CD4-positive, alpha-beta T cell (primary cell): ENCODE measurements at regions of chr11 and their contacts with region 1.

Region 1: DNA sequence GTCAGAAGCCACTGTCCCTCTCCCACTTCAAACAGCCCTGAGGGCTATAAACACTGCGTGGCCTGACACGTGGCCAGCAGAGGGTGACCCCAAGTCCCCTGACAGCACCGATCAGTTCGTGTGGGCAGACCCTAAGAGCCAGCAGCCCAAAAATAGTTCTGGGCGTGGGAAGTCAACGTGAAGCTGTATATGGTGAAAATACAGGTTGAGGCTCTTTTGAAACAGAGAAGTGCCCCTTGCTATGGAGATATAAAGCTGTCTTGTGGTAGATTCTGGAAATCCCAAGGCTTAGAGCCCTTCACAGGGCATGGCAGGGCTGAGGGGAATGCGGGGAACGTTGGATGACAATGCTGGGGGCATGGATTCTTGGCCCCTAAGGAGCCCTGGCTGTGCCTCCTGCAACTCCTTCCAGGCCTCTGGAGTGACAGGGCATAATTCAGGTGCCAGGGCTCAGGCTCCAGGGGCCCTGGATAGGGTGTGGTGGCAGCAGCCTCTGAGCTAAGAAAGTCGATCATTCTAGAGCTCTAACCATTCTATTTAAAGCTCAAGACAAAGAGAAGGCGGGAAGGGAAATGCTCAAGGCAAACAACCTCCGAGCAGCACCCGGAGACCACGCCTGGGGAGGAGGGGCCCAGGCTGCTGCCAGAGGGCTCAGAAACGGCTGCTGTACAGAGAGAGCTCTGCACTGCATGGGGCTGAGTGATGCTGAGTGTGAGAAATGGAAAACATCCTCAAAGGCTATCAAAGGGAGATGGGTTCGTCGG is 60.4 kb upstream of the CD5 start:
- DNase-seq: peak; percentile 72 to 95 (median 90)
- ATAC-seq: peak; percentile 96
- H3K4me3 ChIP-seq: peak overlapping the region; percentile 27
- H3K4me3 Mint-ChIP-seq: peak overlapping the region; percentile 83
- H3K27ac ChIP-seq: peak overlapping the region; percentile 90 to 93
- H3K27ac Mint-ChIP-seq: peak overlapping the region; percentile 98
- H3K4me1 ChIP-seq: peaks cover 56% of the 10 kb centered on the region
- H3K4me1 Mint-ChIP-seq: peaks cover 62% of the 10 kb centered on the region
- H3K27me3 ChIP-seq: no peaks in the 10 kb centered on the region
- H3K27me3 Mint-ChIP-seq: no peaks in the 10 kb centered on the region
- CTCF ChIP-seq: no peak

Region 2: GRCh38 chr11:60265373-60266214 is 776.3 kb before region 1 on chr11:
- CTCF ChIA-PET with region 1: no interaction called
- POLR2A ChIA-PET with region 1: no interaction called
- intact Hi-C with region 1: no loop called
- DNase-seq: peak in 3 of 14 experiments; percentile 24 to 51 (median 46)
- ATAC-seq: no peak
- H3K4me3 ChIP-seq: no peak overlapping the region
- H3K4me3 Mint-ChIP-seq: no peak overlapping the region
- H3K27ac ChIP-seq: no peak overlapping the region
- H3K27ac Mint-ChIP-seq: no peak overlapping the region
- H3K4me1 ChIP-seq: no peaks in the 10 kb centered on the region
- H3K4me1 Mint-ChIP-seq: no peaks in the 10 kb centered on the region
- H3K27me3 ChIP-seq: no peaks in the 10 kb centered on the region
- H3K27me3 Mint-ChIP-seq: peaks cover 9% of the 10 kb centered on the region
- CTCF ChIP-seq: peak; percentile 64

Region 3: DNA sequence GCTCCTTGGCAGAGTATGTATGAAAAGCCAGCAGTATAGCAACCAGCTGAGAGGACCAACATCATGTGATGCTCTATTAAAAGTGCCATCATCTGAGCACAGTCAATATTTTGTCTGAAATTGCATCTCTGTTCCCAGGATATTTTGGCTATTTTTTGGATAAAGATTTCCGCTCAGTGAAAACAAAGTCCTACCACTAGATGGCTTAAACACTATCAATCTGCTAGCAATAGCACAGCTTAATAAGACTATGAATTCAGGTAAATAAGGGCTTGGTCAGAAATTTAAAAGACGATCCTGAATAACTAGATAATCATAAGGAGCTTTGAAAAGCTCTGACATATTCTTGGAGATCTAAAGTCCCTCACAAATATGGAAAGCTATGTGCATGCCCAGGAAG is 452.3 kb before region 1 on chr11:
- CTCF ChIA-PET with region 1: no interaction called
- POLR2A ChIA-PET with region 1: no interaction called
- intact Hi-C with region 1: no loop called
- DNase-seq: no peak
- ATAC-seq: no peak
- H3K4me3 ChIP-seq: no peak overlapping the region
- H3K4me3 Mint-ChIP-seq: no peak overlapping the region
- H3K27ac ChIP-seq: no peak overlapping the region
- H3K27ac Mint-ChIP-seq: no peak overlapping the region
- H3K4me1 ChIP-seq: no peaks in the 10 kb centered on the region
- H3K4me1 Mint-ChIP-seq: no peaks in the 10 kb centered on the region
- H3K27me3 ChIP-seq: peaks cover 0 to 2% of the 10 kb centered on the region in 2 experiments
- H3K27me3 Mint-ChIP-seq: no peaks in the 10 kb centered on the region
- CTCF ChIP-seq: no peak

Region 4: GRCh38 chr11:60913793-60914632 is 127.9 kb before region 1 on chr11 and contains the start of gene TMEM109:
- CTCF ChIA-PET with region 1: interaction called, 3 read pairs
- POLR2A ChIA-PET with region 1: interaction called, 10 read pairs
- intact Hi-C with region 1: no loop called
- DNase-seq: peak; percentile 80 to 95 (median 85)
- ATAC-seq: peak; percentile 67
- H3K4me3 ChIP-seq: peak within 1 kb of the TSS; percentile 95
- H3K4me3 Mint-ChIP-seq: peak within 1 kb of the TSS; percentile 98
- H3K27ac ChIP-seq: peak within 1 kb of the TSS; percentile 97 to 98
- H3K27ac Mint-ChIP-seq: peak within 1 kb of the TSS; percentile 92
- H3K4me1 ChIP-seq: peaks cover 68% of the 10 kb centered on the region
- H3K4me1 Mint-ChIP-seq: peaks cover 65% of the 10 kb centered on the region
- H3K27me3 ChIP-seq: no peaks in the 10 kb centered on the region
- H3K27me3 Mint-ChIP-seq: no peaks in the 10 kb centered on the region
- CTCF ChIP-seq: no peak
- total RNA-seq, gene TMEM109: 27.8 to 32.9 TPM

Region 5: DNA sequence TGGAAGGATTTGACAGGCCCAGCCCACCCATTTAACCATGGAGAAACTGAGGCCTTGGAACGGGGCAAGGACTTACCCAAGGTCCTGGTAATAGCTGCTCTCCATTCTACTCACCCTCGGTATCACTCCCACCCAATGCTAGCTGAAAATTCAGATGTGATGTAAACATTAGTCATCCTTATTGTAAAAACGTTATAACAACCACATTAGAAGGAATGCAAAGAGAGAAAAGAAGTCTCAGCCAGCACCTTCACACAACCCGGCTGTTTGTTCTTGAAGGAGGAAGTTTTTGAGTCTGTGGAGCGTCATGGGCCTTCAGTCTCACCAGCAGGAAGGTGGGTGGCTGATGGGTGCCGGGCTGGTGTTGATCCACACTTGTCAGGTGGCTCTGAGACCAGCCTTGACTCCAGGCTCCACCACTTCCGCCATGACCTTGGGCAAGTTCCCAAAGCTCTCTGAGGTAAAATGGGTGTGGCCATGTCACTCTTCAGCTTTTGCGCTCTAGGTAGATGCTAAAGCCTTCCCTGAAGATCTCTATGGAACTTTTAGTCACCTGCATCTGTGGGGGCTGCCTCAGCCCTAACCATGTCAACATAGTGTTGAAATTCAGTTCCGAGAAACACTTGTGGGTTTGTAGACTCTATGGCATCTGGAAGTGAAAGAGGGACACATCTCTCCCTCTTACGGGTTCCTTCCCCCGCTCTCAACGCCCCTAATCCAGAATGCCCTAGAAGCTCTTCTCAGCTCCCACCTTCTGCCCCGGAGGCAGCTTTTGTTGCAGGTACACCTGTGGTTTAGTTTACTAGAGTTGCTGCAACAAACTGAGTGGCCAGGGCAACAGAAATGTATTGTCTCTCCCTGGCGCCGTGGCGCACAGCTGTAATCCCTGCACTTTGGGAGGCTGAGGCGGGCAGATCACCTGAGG is 55.7 kb before region 1 on chr11:
- CTCF ChIA-PET with region 1: interaction called, 3 read pairs
- POLR2A ChIA-PET with region 1: interaction called, 89 read pairs
- intact Hi-C with region 1: loop called in 1 of 2 experiments (anchors 2 kb)
- DNase-seq: peak; percentile 81 to 99 (median 90)
- ATAC-seq: peak; percentile 81
- H3K4me3 ChIP-seq: peak overlapping the region; percentile 41
- H3K4me3 Mint-ChIP-seq: peak overlapping the region; percentile 72
- H3K27ac ChIP-seq: peak overlapping the region; percentile 86 to 95
- H3K27ac Mint-ChIP-seq: peak overlapping the region; percentile 94
- H3K4me1 ChIP-seq: peaks cover 91% of the 10 kb centered on the region
- H3K4me1 Mint-ChIP-seq: peaks cover 98% of the 10 kb centered on the region
- H3K27me3 ChIP-seq: no peaks in the 10 kb centered on the region
- H3K27me3 Mint-ChIP-seq: no peaks in the 10 kb centered on the region
- CTCF ChIP-seq: no peak

Region 6: DNA sequence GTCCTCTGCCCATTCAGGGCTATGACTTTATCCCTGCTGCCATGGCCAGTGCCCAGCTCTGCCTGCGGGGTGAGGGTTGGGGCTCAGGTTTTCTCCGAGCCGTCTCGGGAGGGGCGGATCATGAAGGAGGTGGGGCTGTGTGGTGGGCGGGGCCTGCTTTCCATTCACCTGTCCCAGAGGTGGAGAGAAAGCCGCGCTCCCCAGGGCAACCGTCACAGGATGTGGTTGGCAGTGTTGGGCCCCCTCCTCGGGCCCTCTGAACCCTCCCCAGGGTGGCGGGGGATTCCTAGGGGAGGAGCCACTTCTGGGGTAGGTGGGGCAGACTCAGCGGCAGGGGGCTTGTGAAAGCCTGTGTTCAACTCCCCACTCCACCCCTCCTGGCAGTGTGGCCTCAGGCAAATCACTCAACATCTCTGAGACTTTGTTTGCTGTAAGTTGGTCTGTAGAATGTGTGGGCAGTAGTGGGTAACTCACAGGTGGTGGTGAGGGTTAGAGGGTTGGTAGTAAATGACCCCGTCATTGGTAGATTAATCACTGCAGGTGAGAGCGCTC is 20.2 kb before region 1 on chr11:
- CTCF ChIA-PET with region 1: interaction called, 4 read pairs
- POLR2A ChIA-PET with region 1: interaction called, 307 read pairs
- intact Hi-C with region 1: loop called in 1 of 2 experiments (anchors 1 kb)
- DNase-seq: peak; percentile 82 to 97 (median 92)
- ATAC-seq: peak; percentile 71
- H3K4me3 ChIP-seq: peak overlapping the region; percentile 21
- H3K4me3 Mint-ChIP-seq: peak overlapping the region; percentile 87
- H3K27ac ChIP-seq: peak overlapping the region; percentile 81 to 88
- H3K27ac Mint-ChIP-seq: peak overlapping the region; percentile 99
- H3K4me1 ChIP-seq: peaks cover 85% of the 10 kb centered on the region
- H3K4me1 Mint-ChIP-seq: peaks cover 85% of the 10 kb centered on the region
- H3K27me3 ChIP-seq: no peaks in the 10 kb centered on the region
- H3K27me3 Mint-ChIP-seq: no peaks in the 10 kb centered on the region
- CTCF ChIP-seq: no peak

Region 7: GRCh38 chr11:61071208-61071681 is 29.3 kb after region 1 on chr11:
- CTCF ChIA-PET with region 1: no interaction called
- POLR2A ChIA-PET with region 1: interaction called, 237 read pairs
- intact Hi-C with region 1: loop called in 1 of 2 experiments (anchors 2 kb)
- DNase-seq: peak; percentile 37 to 88 (median 63)
- ATAC-seq: peak; percentile 95
- H3K4me3 ChIP-seq: no peak overlapping the region
- H3K4me3 Mint-ChIP-seq: peak overlapping the region; percentile 82
- H3K27ac ChIP-seq: peak overlapping the region; percentile 26 to 58
- H3K27ac Mint-ChIP-seq: peak overlapping the region; percentile 92
- H3K4me1 ChIP-seq: peaks cover 80% of the 10 kb centered on the region
- H3K4me1 Mint-ChIP-seq: peaks cover 95% of the 10 kb centered on the region
- H3K27me3 ChIP-seq: no peaks in the 10 kb centered on the region
- H3K27me3 Mint-ChIP-seq: no peaks in the 10 kb centered on the region
- CTCF ChIP-seq: no peak

Region 8: DNA sequence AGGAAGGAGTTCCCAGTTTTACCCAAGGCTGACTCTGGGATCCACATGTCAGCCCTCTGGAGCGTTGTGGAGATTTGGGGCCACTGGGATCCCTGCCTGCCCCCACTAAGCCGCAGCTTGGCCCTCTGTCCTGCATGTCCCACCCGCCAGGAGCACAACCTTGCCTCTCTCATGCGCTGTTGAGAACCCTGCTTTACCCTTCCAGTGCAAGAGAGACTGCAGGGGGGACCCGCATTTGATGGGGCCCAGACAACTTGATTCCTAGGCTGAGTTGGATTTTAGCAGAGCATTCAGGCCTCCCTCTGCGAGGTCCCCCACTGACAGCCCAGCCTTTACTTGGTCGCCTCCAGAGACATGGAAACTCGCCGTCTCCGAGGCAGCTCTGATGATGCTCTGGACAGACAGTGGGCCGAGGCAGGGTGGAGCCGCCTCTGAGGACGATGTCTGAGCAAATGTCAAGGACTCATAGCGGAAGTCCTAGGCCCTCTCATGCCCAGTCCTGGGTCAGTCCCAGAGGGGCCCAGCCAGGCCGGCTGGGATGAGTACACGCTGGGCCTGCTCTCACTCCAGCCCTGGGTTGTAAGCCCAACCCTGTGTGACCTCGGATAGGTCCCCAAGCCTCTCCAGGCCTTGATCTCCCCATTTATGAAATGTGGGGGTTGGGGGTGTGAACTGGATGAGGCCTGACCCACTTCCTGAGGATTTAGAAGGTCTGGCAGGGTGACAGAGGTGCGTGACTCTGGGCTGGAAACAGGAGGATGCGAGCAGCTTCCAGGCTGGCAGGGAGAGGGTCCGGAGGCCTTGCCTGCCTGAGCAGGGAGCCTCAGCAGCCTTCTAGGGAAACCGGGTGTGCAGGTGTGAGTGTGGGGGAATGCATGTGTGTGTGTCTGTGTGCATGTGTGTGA is 61.0 kb after region 1 on chr11:
- CTCF ChIA-PET with region 1: no interaction called
- POLR2A ChIA-PET with region 1: interaction called, 27 read pairs
- intact Hi-C with region 1: no loop called
- DNase-seq: peak in 4 of 14 experiments; percentile 47 to 78 (median 55)
- ATAC-seq: peak; percentile 22
- H3K4me3 ChIP-seq: peak overlapping the region; percentile 100
- H3K4me3 Mint-ChIP-seq: no peak overlapping the region
- H3K27ac ChIP-seq: peak overlapping the region; percentile 95 to 96
- H3K27ac Mint-ChIP-seq: no peak overlapping the region
- H3K4me1 ChIP-seq: peaks cover 58% of the 10 kb centered on the region
- H3K4me1 Mint-ChIP-seq: peaks cover 45% of the 10 kb centered on the region
- H3K27me3 ChIP-seq: no peaks in the 10 kb centered on the region
- H3K27me3 Mint-ChIP-seq: no peaks in the 10 kb centered on the region
- CTCF ChIP-seq: no peak

Region 9: DNA sequence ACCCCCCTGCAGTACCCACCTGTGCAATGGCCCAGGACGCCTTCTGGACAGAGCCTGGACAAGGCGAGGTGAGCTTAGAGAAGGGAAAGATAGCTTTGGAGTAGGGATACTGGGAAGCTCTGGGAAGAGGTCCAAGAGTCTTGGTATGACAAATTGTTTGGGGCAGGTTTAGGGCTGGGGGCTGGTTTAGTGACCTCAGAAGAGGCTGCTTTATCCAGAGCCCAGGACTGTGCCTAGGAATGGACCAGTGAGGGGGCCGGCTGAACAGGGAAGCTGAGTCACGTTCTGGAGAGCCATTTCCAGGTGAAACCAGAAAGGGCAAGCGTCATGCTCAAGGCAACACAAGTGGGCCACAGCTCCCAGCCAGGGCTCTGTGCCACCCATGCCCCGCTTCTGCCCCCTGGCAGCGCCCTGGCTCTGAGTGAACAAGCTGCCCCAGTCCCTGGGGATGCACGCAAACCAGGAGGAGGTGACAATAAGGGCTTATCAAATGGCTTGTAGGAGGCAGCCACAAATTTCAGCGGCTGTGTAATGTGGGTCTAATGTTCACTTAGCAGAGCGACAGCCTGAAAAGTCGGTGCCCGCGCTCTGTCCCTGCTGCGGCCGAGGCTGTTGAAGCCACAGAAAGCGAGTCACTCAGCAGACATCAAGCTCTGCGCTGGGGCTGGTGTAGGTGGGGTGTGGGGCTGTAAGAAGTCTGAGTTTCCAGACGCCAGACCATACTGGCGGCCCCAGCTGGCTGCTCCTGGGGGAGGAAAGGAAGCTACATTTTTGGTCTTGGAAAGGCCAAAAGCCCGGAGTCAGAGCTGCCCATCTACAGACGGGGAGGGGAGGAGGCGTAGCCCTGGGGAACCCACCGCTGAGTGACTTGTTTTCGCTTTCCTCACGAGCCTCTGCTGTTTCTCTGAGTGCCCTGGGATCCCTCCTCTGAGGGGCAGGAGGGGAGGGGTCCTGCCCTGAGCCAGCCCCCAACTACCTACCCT is 557.2 kb after region 1 on chr11:
- CTCF ChIA-PET with region 1: no interaction called
- POLR2A ChIA-PET with region 1: no interaction called
- intact Hi-C with region 1: no loop called
- DNase-seq: no peak
- ATAC-seq: no peak
- H3K4me3 ChIP-seq: no peak overlapping the region
- H3K4me3 Mint-ChIP-seq: no peak overlapping the region
- H3K27ac ChIP-seq: no peak overlapping the region
- H3K27ac Mint-ChIP-seq: no peak overlapping the region
- H3K4me1 ChIP-seq: no peaks in the 10 kb centered on the region
- H3K4me1 Mint-ChIP-seq: no peaks in the 10 kb centered on the region
- H3K27me3 ChIP-seq: peaks cover 2 to 6% of the 10 kb centered on the region in 2 experiments
- H3K27me3 Mint-ChIP-seq: peaks cover 22% of the 10 kb centered on the region
- CTCF ChIP-seq: no peak